BJ (cell line): ENCODE measurements at regions of chr5 and their contacts with region 1.

Region 1: DNA sequence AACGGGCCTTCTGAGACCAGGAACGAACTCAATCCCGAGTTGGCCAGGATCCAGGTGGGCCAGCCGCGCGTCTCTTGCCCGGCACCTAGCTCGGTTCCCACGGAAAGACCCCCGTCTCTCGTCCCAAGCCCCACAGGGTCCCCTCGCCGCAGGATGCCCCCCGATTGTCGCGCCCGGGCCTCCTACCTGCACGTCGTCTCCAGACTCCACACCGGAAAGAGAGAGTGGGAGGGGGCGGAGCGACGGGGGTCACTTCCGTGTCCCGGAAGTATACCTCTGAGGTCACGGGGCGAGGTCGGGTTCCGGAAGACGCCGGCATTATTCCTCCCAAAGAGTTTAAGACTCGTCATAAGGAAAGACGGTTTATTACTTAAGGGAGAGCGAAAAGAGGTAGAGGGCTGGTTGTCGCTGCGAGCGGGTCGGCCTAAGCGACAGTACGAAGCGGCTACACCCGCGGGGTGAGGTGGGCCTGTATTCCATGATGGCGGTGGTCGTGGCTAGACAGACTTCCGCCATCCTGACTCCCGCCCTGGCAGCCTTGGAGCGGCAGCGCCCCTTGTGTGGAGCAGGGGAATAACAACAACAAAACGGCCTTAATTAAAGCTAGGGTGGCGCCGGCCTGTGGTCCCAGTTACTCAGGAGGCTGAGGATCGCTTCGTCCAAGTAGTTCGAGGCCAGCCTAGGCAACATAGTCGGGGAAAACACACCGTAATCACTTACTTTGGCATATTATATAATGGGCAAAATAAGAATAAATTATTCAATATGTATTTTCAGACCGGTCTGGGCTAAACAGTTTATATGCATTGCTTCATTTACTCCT is at the start of gene RPS14:
- DNase-seq: peak; percentile 65
- H3K4me3 ChIP-seq: peak within 1 kb of the TSS; percentile 63
- H3K27me3 ChIP-seq: no peaks in the 10 kb centered on the region
- CTCF ChIP-seq: peak; percentile 82
- polyA plus RNA-seq, gene RPS14: 2,496 and 3,512 TPM in 2 replicates

Region 2: GRCh38 chr5:150410524-150411244 is 39.0 kb before region 1 on chr5:
- CTCF ChIA-PET with region 1: no interaction called
- POLR2A ChIA-PET with region 1: interaction called, 10 read pairs
- DNase-seq: no peak
- H3K4me3 ChIP-seq: no peak overlapping the region
- H3K27me3 ChIP-seq: no peaks in the 10 kb centered on the region
- CTCF ChIP-seq: no peak

Region 3: GRCh38 chr5:150436141-150436680 is 13.5 kb before region 1 on chr5:
- CTCF ChIA-PET with region 1: interaction called, 10 read pairs
- POLR2A ChIA-PET with region 1: interaction called, 9 read pairs
- DNase-seq: peak; percentile 27
- H3K4me3 ChIP-seq: no peak overlapping the region
- H3K27me3 ChIP-seq: no peaks in the 10 kb centered on the region
- CTCF ChIP-seq: peak; percentile 80

Region 4: DNA sequence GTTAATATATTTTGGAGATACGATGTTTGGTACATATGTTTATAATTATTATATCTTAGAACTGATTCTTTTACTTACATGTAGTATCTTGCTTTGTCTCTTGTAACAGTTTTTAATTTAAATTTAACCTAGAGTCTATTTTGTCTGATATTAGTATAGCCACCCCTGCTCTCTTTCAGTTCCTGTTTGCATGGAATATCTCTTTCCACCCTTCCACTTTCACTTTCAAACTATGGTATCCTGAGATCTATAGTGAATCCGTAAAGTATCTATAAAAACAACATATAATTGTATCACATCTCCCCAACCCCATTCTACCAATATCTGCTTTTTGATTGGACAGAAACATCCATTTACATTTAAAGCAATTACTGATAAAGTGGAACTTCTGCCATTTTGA is 403.8 kb after region 1 on chr5:
- CTCF ChIA-PET with region 1: no interaction called
- POLR2A ChIA-PET with region 1: no interaction called
- DNase-seq: no peak
- H3K4me3 ChIP-seq: no peak overlapping the region
- H3K27me3 ChIP-seq: no peaks in the 10 kb centered on the region; the same call in 1 of the 2 replicates
- CTCF ChIP-seq: no peak